MCF 10A (cell line): ENCODE measurements at regions of chr7 and their contacts with region 1.

Region 1: GRCh38 chr7:16982640-16983350 is 101.0 kb upstream of the AGR3 start:
- DNase-seq: peak; percentile 57
- H3K4me3 Mint-ChIP-seq: no peak overlapping the region
- H3K27ac Mint-ChIP-seq: no peak overlapping the region
- H3K4me1 Mint-ChIP-seq: peaks cover 26% of the 10 kb centered on the region
- H3K27me3 Mint-ChIP-seq: no peaks in the 10 kb centered on the region
- CTCF ChIP-seq: peak; percentile 79

Region 2: DNA sequence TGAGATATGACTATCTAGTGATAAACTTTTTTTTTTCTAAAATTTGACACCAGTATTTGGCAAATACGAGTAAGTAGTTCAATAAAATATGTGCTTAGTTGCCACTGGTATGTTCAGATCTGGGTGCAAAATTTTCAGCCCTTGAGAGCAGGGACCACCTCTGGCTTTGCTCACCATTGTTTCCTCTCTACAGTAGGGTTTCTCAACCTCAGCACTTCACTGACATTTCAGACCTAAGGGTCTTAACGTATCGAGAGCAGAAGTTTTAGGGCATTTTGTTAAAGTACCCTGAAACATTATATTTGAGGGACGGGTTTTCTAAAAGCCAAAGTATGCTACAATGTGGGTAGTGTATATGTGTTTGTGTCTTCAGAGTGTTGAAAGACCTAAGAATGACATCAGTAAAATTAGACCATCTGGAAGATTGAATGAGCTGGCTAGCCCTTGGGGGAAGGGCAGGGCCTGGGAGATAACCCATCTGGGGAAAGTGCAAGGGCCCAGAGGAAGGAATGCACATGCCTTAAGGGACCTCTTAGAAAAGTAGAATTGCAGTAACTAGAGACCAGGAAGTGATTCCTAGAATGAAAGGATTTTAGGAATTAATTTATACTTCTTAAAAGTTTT is 325.0 kb before region 1 on chr7:
- CTCF ChIA-PET with region 1: no interaction called
- POLR2A ChIA-PET with region 1: no interaction called
- intact Hi-C with region 1: no loop called
- DNase-seq: peak; percentile 83
- H3K4me3 Mint-ChIP-seq: no peak overlapping the region
- H3K27ac Mint-ChIP-seq: peak overlapping the region; percentile 40
- H3K4me1 Mint-ChIP-seq: peaks cover 34% of the 10 kb centered on the region
- H3K27me3 Mint-ChIP-seq: no peaks in the 10 kb centered on the region
- CTCF ChIP-seq: no peak

Region 3: DNA sequence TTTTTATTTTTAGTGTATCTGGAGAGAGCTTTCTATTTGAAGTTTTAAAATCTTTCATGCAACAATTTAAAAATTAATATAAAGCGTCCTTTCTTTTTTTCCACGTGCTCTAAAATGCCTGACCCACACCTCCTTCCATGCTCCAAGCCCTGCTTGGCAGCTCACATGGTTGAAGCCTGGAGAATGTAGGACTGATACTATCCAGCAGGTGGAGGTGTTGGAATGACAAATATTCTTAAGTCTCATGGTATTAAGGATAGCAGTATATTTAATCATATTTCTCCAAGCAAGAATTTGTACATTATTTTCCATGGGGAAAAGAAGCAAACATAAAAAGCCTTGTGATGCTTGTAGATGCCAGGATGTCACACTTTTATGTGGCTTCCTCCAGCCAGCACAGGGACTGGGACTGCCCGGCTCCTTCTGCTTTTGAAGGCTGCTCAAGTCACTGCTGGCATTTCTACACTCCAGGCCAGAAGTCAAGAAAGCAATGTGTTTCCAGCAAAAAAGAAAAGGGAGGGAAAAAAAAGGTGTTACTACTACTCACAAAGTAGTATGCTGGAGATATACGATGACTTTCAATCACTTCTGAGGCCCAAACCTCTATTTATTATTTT is 287.1 kb before region 1 on chr7:
- CTCF ChIA-PET with region 1: no interaction called
- POLR2A ChIA-PET with region 1: no interaction called
- intact Hi-C with region 1: no loop called
- DNase-seq: peak; percentile 65
- H3K4me3 Mint-ChIP-seq: no peak overlapping the region
- H3K27ac Mint-ChIP-seq: no peak overlapping the region
- H3K4me1 Mint-ChIP-seq: no peaks in the 10 kb centered on the region
- H3K27me3 Mint-ChIP-seq: no peaks in the 10 kb centered on the region
- CTCF ChIP-seq: peak; percentile 50

Region 4: DNA sequence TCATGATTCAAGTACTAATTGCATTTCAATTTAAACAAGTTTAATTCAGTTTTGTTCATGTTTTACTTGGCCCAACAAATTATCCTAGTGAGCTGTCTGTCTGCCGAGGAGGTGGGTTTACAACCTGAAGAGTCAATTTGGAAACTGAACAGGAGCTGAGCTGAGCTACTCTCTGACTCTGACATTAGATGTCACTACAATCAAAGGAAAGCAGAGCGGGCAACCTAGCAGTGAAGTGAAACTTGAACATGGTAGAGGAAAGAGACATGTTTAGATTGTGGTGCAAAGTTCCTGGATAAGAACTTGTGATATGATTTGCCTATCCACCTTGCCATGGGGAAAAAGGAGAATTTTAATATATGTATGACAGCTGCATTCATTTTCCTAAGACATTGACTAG is 91.5 kb before region 1 on chr7:
- CTCF ChIA-PET with region 1: interaction called, 5 read pairs
- POLR2A ChIA-PET with region 1: no interaction called
- intact Hi-C with region 1: loop called (anchors 2 kb)
- DNase-seq: peak; percentile 74
- H3K4me3 Mint-ChIP-seq: no peak overlapping the region
- H3K27ac Mint-ChIP-seq: no peak overlapping the region
- H3K4me1 Mint-ChIP-seq: peaks cover 5% of the 10 kb centered on the region
- H3K27me3 Mint-ChIP-seq: no peaks in the 10 kb centered on the region
- CTCF ChIP-seq: peak; percentile 68

Region 5: GRCh38 chr7:17063045-17063383 is 80.2 kb after region 1 on chr7:
- CTCF ChIA-PET with region 1: interaction called, 12 read pairs
- POLR2A ChIA-PET with region 1: no interaction called
- intact Hi-C with region 1: loop called (anchors 5 kb)
- DNase-seq: peak; percentile 23
- H3K4me3 Mint-ChIP-seq: no peak overlapping the region
- H3K27ac Mint-ChIP-seq: no peak overlapping the region
- H3K4me1 Mint-ChIP-seq: no peaks in the 10 kb centered on the region
- H3K27me3 Mint-ChIP-seq: no peaks in the 10 kb centered on the region
- CTCF ChIP-seq: peak; percentile 26

Region 6: DNA sequence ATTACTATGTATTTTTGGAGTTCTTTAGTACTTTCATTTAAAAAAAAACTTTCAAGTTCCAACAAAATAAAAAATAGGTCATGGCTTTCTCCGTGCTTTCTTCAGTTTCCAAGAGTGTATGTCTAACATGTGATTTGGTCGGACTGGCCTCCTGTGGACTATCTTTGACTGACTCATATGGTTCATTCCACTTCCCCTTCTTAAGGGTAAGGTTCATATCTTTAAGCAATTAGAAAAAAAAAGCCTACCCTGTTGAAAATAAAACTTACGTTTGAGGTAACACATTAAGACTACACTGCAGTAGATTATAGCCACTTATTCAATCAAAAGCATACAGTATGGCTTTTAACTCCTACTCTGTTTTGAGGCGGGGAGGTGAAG is 202.9 kb after region 1 on chr7:
- CTCF ChIA-PET with region 1: interaction called, 10 read pairs
- POLR2A ChIA-PET with region 1: no interaction called
- intact Hi-C with region 1: no loop called
- DNase-seq: no peak
- H3K4me3 Mint-ChIP-seq: no peak overlapping the region
- H3K27ac Mint-ChIP-seq: no peak overlapping the region
- H3K4me1 Mint-ChIP-seq: no peaks in the 10 kb centered on the region
- H3K27me3 Mint-ChIP-seq: no peaks in the 10 kb centered on the region
- CTCF ChIP-seq: no peak

Region 7: GRCh38 chr7:17530741-17531417 is 548.1 kb after region 1 on chr7:
- CTCF ChIA-PET with region 1: interaction called, 3 read pairs
- POLR2A ChIA-PET with region 1: no interaction called
- intact Hi-C with region 1: loop called (anchors 10 kb)
- DNase-seq: peak; percentile 44
- H3K4me3 Mint-ChIP-seq: no peak overlapping the region
- H3K27ac Mint-ChIP-seq: peak overlapping the region; percentile 52
- H3K4me1 Mint-ChIP-seq: peaks cover 45% of the 10 kb centered on the region
- H3K27me3 Mint-ChIP-seq: no peaks in the 10 kb centered on the region
- CTCF ChIP-seq: peak; percentile 17

Region 8: DNA sequence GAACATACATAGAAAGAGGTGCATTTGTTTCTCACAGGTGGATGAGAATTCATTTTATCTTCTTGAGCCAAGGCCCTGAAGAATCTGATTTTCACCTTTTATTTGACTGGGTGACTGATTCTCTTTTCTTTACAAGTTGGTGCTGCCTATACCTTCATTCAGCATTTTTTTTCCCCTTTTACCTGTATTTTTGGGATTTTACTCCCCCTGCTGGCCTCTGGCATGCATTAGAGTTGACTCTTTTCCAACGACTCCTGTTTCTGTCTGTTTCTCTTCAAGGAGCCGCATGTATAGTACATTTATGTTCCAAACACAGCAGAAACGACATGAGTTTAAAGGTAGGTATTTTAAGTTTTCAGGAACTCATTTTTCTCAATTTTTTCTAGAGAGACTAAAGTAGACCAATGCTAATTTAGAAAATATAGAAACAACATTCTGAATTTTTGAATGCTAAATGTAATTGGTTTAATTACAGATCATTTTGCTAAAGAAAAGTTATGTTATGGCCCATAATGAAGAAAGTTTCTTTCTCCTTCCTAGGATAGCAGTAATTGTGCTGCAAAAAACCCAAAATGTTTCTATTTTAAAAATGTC is 1362.9 kb after region 1 on chr7:
- CTCF ChIA-PET with region 1: no interaction called
- POLR2A ChIA-PET with region 1: no interaction called
- intact Hi-C with region 1: loop called (anchors 10 kb)
- DNase-seq: peak; percentile 78
- H3K4me3 Mint-ChIP-seq: no peak overlapping the region
- H3K27ac Mint-ChIP-seq: no peak overlapping the region
- H3K4me1 Mint-ChIP-seq: no peaks in the 10 kb centered on the region
- H3K27me3 Mint-ChIP-seq: no peaks in the 10 kb centered on the region
- CTCF ChIP-seq: peak; percentile 74